CD8-positive, alpha-beta T cell (primary cell): ENCODE measurements at regions of chr12 and their contacts with region 1.

Region 1: GRCh38 chr12:49707128-49707811 is at the start of gene FMNL3:
- DNase-seq: peak; percentile 98 to 100 (median 99)
- ATAC-seq: peak; percentile 93
- H3K4me3 ChIP-seq: peak within 1 kb of the TSS; percentile 70 to 84
- H3K4me3 Mint-ChIP-seq: peak within 1 kb of the TSS; percentile 92
- H3K27ac ChIP-seq: peak within 1 kb of the TSS; percentile 55 to 77
- H3K27ac Mint-ChIP-seq: peak within 1 kb of the TSS; percentile 90
- H3K4me1 ChIP-seq: peaks cover 32% of the 10 kb centered on the region
- H3K4me1 Mint-ChIP-seq: peaks cover 47% of the 10 kb centered on the region
- H3K27me3 ChIP-seq: no peaks in the 10 kb centered on the region
- H3K27me3 Mint-ChIP-seq: peaks cover 3% of the 10 kb centered on the region
- CTCF ChIP-seq: peak; percentile 97
- total RNA-seq, gene FMNL3: 27.9 to 31.9 TPM

Region 2: GRCh38 chr12:49366652-49367380 is 340.5 kb before region 1 on chr12:
- CTCF ChIA-PET with region 1: no interaction called
- POLR2A ChIA-PET with region 1: no interaction called
- intact Hi-C with region 1: loop called in 1 of 2 experiments (anchors 2 kb)
- DNase-seq: peak; percentile 74 to 91 (median 84)
- ATAC-seq: peak; percentile 83
- H3K4me3 ChIP-seq: peak overlapping the region; percentile 91 to 100
- H3K4me3 Mint-ChIP-seq: peak overlapping the region; percentile 96
- H3K27ac ChIP-seq: peak overlapping the region; percentile 79 to 85
- H3K27ac Mint-ChIP-seq: peak overlapping the region; percentile 91
- H3K4me1 ChIP-seq: peaks cover 16% of the 10 kb centered on the region
- H3K4me1 Mint-ChIP-seq: peaks cover 31% of the 10 kb centered on the region
- H3K27me3 ChIP-seq: no peaks in the 10 kb centered on the region
- H3K27me3 Mint-ChIP-seq: no peaks in the 10 kb centered on the region
- CTCF ChIP-seq: no peak

Region 3: DNA sequence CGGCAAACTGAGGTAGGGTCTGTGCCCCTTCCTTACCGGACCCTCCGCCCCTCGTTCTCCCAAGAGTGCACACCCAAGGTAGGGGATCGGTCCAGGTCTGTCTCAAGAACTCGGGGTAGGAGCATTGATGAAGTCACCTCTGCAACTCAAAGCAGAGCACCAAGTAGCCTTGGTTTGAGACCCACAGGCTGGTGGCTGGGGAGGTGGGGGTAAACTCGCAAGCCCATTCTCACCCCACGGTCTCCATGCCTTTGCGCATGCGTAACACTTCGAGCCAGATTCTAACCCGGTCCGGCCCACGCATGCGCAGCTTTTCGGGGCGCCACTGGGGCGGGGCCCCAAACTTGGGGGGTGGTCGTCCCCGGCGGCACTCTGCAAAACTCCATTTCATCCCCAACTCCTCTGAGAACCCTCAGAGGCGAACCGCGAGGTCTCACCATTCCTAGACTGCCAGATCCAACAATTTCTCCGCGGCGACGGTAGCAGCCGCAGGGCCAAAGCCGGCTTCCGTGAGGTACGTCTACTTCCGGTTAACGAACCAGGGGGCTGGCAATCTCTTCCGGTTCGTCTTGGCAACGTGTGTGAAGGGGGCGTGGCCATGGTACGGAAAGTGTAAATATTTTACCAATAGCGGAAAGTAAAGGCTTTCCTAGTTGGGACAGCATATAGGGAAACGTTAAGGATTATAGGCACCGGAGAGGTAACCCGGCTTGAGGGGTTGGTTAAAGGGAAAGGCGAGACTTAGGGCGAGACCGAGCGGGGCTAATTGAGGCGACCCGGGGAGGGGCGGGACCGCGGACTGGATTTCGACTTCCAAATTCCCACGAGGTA is 139.4 kb before region 1 on chr12 and contains the start of gene MCRS1:
- CTCF ChIA-PET with region 1: no interaction called
- POLR2A ChIA-PET with region 1: interaction called, 3 read pairs
- intact Hi-C with region 1: loop called in 1 of 2 experiments (anchors 1 kb)
- DNase-seq: peak; percentile 74 to 96 (median 91)
- ATAC-seq: peak; percentile 85
- H3K4me3 ChIP-seq: peak within 1 kb of the TSS; percentile 80 to 89
- H3K4me3 Mint-ChIP-seq: peak within 1 kb of the TSS; percentile 99
- H3K27ac ChIP-seq: peak within 1 kb of the TSS; percentile 93 to 98
- H3K27ac Mint-ChIP-seq: peak within 1 kb of the TSS; percentile 100
- H3K4me1 ChIP-seq: peaks cover 59% of the 10 kb centered on the region
- H3K4me1 Mint-ChIP-seq: peaks cover 63% of the 10 kb centered on the region
- H3K27me3 ChIP-seq: no peaks in the 10 kb centered on the region
- H3K27me3 Mint-ChIP-seq: no peaks in the 10 kb centered on the region
- CTCF ChIP-seq: no peak
- total RNA-seq, gene MCRS1: 63.7 to 70.9 TPM

Region 4: GRCh38 chr12:49636979-49637755 is 70.1 kb before region 1 on chr12:
- CTCF ChIA-PET with region 1: interaction called, 493 read pairs
- POLR2A ChIA-PET with region 1: interaction called, 3 read pairs
- intact Hi-C with region 1: loop called (anchors 1 kb)
- DNase-seq: peak in 8 of 9 experiments; percentile 39 to 76 (median 62)
- ATAC-seq: peak; percentile 99
- H3K4me3 ChIP-seq: no peak overlapping the region
- H3K4me3 Mint-ChIP-seq: no peak overlapping the region
- H3K27ac ChIP-seq: no peak overlapping the region
- H3K27ac Mint-ChIP-seq: peak overlapping the region; percentile 46
- H3K4me1 ChIP-seq: peaks cover 21% of the 10 kb centered on the region
- H3K4me1 Mint-ChIP-seq: peaks cover 29% of the 10 kb centered on the region
- H3K27me3 ChIP-seq: no peaks in the 10 kb centered on the region
- H3K27me3 Mint-ChIP-seq: no peaks in the 10 kb centered on the region
- CTCF ChIP-seq: peak; percentile 65

Region 5: DNA sequence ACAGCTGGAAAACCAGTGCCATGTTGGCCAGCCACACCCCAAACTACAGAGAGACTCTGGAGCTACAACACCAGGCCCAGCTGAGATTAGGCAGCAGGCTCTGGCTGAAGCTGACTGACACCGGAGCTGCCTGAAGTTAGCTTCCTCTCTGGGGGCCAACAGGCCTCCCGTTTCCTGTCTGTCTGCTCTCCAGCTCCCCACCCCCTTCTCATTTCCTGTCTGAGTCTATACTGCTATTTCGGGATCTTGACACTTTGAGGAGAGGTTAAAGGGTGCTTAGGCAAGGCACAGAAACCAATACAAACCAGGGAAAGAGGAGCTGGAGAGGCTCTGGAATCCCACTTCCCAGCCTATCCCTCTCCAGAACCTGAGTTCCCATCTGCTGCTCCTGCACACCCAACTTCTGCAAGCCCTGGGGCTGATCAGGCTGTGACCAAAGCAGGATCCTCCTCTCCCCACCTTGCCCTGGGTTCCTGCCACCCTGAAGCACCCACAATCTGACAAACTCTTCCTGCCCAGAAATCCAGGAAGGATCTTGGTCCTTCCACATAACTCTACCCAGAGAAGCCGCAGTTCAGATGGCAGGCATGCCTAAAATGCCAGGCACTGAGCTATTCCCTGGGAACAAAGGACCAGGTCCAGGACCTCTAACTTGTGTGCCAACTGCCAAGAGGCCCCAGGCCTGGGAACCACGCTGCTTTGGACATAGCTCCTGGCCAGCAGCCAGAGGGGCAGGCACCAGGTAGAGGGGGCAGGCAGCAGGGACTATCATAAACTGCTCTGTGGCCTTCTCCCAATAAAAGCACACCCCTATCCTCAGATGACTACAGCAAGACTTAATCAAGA is 44.0 kb before region 1 on chr12:
- CTCF ChIA-PET with region 1: interaction called, 43 read pairs
- POLR2A ChIA-PET with region 1: interaction called, 12 read pairs
- intact Hi-C with region 1: loop called in 1 of 2 experiments (anchors 1 kb)
- DNase-seq: peak; percentile 47 to 92 (median 80)
- ATAC-seq: peak; percentile 98
- H3K4me3 ChIP-seq: peak overlapping the region; percentile 27 to 42
- H3K4me3 Mint-ChIP-seq: peak overlapping the region; percentile 83
- H3K27ac ChIP-seq: peak overlapping the region; percentile 61 to 93
- H3K27ac Mint-ChIP-seq: peak overlapping the region; percentile 99
- H3K4me1 ChIP-seq: peaks cover 59% of the 10 kb centered on the region
- H3K4me1 Mint-ChIP-seq: peaks cover 83% of the 10 kb centered on the region
- H3K27me3 ChIP-seq: no peaks in the 10 kb centered on the region
- H3K27me3 Mint-ChIP-seq: no peaks in the 10 kb centered on the region
- CTCF ChIP-seq: no peak

Region 6: DNA sequence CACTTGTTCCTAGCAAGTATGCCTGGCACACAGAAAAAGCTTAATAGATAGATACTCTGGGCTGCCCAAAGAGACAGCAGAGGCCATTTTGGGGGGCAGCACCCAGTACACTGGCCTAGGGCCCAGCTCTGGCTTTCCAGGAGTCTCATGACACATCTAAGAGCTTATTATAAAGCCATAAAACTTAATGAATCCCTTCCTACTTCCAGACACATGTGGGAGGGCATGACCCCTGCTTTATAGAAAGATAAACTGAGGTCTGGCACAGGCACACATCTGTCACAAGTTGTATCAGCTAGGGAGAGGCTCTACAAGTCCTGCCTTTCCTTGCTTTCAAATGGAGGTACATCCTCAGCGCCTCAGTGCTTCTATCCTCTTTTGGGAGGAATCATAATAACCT is 27.2 kb before region 1 on chr12:
- CTCF ChIA-PET with region 1: interaction called, 65 read pairs
- POLR2A ChIA-PET with region 1: interaction called, 25 read pairs
- intact Hi-C with region 1: loop called in 1 of 2 experiments (anchors 2 kb)
- DNase-seq: no peak
- ATAC-seq: no peak
- H3K4me3 ChIP-seq: no peak overlapping the region
- H3K4me3 Mint-ChIP-seq: no peak overlapping the region
- H3K27ac ChIP-seq: no peak overlapping the region
- H3K27ac Mint-ChIP-seq: no peak overlapping the region
- H3K4me1 ChIP-seq: peaks cover 15% of the 10 kb centered on the region
- H3K4me1 Mint-ChIP-seq: peaks cover 56% of the 10 kb centered on the region
- H3K27me3 ChIP-seq: no peaks in the 10 kb centered on the region
- H3K27me3 Mint-ChIP-seq: no peaks in the 10 kb centered on the region
- CTCF ChIP-seq: no peak

Region 7: DNA sequence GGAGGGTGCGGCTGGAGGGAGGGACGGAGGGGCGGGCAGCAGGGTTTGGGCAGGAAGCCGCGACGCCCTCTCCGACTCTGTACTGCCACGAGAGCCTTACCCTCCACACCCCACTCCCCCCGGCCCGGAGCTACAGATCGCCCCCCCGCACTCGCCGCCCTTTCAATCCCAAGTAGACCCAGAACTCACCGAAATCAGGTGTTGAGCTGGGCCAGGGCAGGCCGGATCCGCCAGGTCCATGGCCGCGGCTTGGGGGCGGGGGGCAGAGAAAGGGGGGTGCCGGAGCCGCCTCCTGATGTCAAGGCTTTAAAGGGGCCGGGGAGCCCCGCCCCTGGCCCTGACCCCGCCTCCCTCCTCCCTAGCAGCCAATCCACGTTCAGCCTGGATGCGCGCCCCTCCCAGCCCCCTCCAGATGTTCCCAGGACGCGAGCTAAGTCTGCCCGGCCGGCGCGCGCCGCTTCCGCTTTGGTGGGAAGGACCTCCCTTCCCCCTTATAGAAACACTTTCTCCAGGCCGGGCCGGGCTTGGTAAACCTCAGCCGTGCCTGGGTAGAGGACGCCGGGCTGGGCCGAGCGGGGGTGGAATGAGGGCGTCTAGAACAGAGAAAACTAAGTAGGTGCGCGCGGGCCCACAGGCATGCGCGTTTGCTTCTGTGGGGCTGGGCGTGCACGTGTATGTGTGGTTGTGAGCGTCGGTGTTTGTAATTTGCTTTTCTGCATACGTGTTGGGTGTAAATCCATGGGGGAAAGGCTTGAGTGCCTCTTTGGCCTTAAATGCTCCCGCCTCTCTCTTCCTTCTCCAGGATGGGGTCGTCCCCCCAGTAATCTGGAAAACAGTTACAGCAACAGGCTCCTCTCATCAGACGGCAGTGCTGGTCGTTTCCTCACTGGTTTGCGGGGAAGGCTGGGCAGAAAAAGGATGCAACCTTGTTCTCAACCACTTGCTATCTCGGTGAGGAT is 121.1 kb after region 1 on chr12 and contains the start of gene NCKAP5L:
- CTCF ChIA-PET with region 1: no interaction called
- POLR2A ChIA-PET with region 1: no interaction called
- intact Hi-C with region 1: loop called in 1 of 2 experiments (anchors 1 kb)
- DNase-seq: peak; percentile 86 to 96 (median 94)
- ATAC-seq: peak; percentile 97
- H3K4me3 ChIP-seq: peak within 1 kb of the TSS; percentile 68 to 91
- H3K4me3 Mint-ChIP-seq: peak within 1 kb of the TSS; percentile 97
- H3K27ac ChIP-seq: peak within 1 kb of the TSS; percentile 65 to 69
- H3K27ac Mint-ChIP-seq: peak within 1 kb of the TSS; percentile 97
- H3K4me1 ChIP-seq: peaks cover 15% of the 10 kb centered on the region
- H3K4me1 Mint-ChIP-seq: peaks cover 39% of the 10 kb centered on the region
- H3K27me3 ChIP-seq: no peaks in the 10 kb centered on the region
- H3K27me3 Mint-ChIP-seq: no peaks in the 10 kb centered on the region
- CTCF ChIP-seq: no peak
- total RNA-seq, gene NCKAP5L: 10.6 to 10.7 TPM

Region 8: GRCh38 chr12:50564237-50564947 is 857.1 kb after region 1 on chr12:
- CTCF ChIA-PET with region 1: no interaction called
- POLR2A ChIA-PET with region 1: no interaction called
- intact Hi-C with region 1: no loop called
- DNase-seq: no peak
- ATAC-seq: no peak
- H3K4me3 ChIP-seq: no peak overlapping the region
- H3K4me3 Mint-ChIP-seq: no peak overlapping the region
- H3K27ac ChIP-seq: no peak overlapping the region
- H3K27ac Mint-ChIP-seq: peak overlapping the region; percentile 8
- H3K4me1 ChIP-seq: peaks cover 14% of the 10 kb centered on the region
- H3K4me1 Mint-ChIP-seq: peaks cover 53% of the 10 kb centered on the region
- H3K27me3 ChIP-seq: no peaks in the 10 kb centered on the region
- H3K27me3 Mint-ChIP-seq: no peaks in the 10 kb centered on the region
- CTCF ChIP-seq: no peak